B cell (primary cell): ENCODE measurements at regions of chr17 and their contacts with region 1.

Region 1: DNA sequence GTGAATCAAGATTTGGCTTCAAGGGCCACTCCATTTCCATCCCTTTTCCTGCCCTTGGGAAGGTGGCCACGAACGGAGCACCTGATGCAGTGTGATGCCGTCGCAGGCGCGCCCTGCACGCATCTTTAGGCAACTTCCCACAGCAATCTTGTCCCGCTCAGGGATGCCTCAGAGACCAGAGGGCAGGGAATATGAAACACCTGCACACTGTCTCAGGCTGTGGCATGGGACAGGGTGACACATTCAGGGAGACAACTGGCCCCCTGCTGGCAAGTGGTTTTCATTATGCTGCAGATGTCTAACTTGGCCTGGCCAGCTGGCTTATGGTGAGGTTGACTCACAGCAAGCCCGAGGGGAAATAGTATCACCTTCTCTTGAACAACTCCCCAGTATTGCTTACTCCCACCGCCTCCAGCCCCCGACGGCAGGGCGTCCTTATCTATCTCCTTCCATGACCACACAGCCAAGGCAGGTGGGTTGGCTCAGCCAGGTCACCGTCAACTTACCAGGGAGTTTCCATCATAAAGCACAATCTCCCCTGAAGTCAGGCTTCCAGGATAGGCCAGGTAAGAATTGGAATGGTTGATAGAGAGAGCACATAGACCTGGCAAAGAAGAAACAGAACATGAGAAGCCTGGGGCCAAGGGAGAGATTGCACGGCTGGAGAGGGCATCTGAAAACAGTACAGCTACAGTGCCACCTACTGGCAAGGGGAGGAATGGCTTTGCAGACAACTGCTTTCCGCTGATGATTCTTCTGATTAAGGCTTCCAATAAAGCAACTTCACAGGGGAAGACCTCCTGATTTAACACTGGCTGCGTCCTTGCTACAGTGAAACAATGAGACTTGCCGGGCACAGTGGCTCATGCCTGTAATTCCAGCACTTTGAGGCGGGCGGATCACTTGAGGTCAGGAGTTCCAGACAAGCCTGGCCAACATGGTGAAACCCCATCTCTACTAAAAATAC is 21.1 kb downstream of the WIPI1 start:
- DNase-seq: peak; percentile 86
- ATAC-seq: peak; percentile 74
- H3K4me3 ChIP-seq: no peak overlapping the region
- H3K4me3 Mint-ChIP-seq: peak overlapping the region; percentile 63
- H3K27ac ChIP-seq: no peak overlapping the region
- H3K27ac Mint-ChIP-seq: peak overlapping the region; percentile 13
- H3K4me1 ChIP-seq: peaks cover 39 to 40% of the 10 kb centered on the region in 2 donors
- H3K4me1 Mint-ChIP-seq: peaks cover 50% of the 10 kb centered on the region
- H3K27me3 ChIP-seq: no peaks in the 10 kb centered on the region
- H3K27me3 Mint-ChIP-seq: no peaks in the 10 kb centered on the region
- CTCF ChIP-seq: peak; percentile 85

Region 2: DNA sequence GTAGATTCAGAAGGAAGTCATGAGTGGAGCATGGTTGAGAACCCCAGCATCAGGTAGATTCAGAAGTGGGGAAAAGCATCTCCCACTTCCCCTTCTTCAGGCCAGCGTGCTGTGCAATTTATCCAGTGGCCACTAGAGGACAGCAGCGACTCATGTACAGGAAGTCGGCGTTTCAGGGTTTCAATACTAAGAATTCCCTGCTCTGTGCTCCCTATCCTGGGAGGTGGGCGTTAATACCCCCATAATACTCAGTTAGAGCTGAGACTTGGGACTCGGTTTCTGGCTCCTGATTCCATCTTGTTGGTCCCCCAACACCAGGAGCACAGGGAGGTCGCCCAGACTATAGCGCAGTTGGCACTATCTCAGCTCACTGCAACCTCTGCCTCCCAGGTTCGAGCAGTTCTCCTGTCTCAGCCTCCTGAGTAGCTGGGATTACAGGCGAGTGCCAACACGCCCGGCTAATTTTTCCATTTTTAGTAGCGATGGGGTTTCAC is 263.7 kb before region 1 on chr17:
- CTCF ChIA-PET with region 1: interaction called, 43 read pairs
- POLR2A ChIA-PET with region 1: no interaction called
- intact Hi-C with region 1: loop called (anchors 1 kb)
- DNase-seq: peak; percentile 87
- ATAC-seq: peak; percentile 94
- H3K4me3 ChIP-seq: no peak overlapping the region
- H3K4me3 Mint-ChIP-seq: no peak overlapping the region
- H3K27ac ChIP-seq: no peak overlapping the region
- H3K27ac Mint-ChIP-seq: no peak overlapping the region
- H3K4me1 ChIP-seq: peaks cover 0 to 9% of the 10 kb centered on the region in 2 donors
- H3K4me1 Mint-ChIP-seq: peaks cover 3% of the 10 kb centered on the region
- H3K27me3 ChIP-seq: no peaks in the 10 kb centered on the region
- H3K27me3 Mint-ChIP-seq: no peaks in the 10 kb centered on the region
- CTCF ChIP-seq: peak; percentile 99

Region 3: GRCh38 chr17:68255731-68256538 is 180.2 kb before region 1 on chr17:
- CTCF ChIA-PET with region 1: interaction called, 66 read pairs
- POLR2A ChIA-PET with region 1: no interaction called
- intact Hi-C with region 1: no loop called
- DNase-seq: peak; percentile 42
- ATAC-seq: no peak
- H3K4me3 ChIP-seq: peak overlapping the region in 1 of 5 experiments; percentile 11
- H3K4me3 Mint-ChIP-seq: peak overlapping the region; percentile 72
- H3K27ac ChIP-seq: peak overlapping the region; percentile 30 to 84
- H3K27ac Mint-ChIP-seq: peak overlapping the region; percentile 85
- H3K4me1 ChIP-seq: peaks cover 68 to 73% of the 10 kb centered on the region in 2 donors
- H3K4me1 Mint-ChIP-seq: peaks cover 74% of the 10 kb centered on the region
- H3K27me3 ChIP-seq: no peaks in the 10 kb centered on the region
- H3K27me3 Mint-ChIP-seq: no peaks in the 10 kb centered on the region
- CTCF ChIP-seq: no peak

Region 4: DNA sequence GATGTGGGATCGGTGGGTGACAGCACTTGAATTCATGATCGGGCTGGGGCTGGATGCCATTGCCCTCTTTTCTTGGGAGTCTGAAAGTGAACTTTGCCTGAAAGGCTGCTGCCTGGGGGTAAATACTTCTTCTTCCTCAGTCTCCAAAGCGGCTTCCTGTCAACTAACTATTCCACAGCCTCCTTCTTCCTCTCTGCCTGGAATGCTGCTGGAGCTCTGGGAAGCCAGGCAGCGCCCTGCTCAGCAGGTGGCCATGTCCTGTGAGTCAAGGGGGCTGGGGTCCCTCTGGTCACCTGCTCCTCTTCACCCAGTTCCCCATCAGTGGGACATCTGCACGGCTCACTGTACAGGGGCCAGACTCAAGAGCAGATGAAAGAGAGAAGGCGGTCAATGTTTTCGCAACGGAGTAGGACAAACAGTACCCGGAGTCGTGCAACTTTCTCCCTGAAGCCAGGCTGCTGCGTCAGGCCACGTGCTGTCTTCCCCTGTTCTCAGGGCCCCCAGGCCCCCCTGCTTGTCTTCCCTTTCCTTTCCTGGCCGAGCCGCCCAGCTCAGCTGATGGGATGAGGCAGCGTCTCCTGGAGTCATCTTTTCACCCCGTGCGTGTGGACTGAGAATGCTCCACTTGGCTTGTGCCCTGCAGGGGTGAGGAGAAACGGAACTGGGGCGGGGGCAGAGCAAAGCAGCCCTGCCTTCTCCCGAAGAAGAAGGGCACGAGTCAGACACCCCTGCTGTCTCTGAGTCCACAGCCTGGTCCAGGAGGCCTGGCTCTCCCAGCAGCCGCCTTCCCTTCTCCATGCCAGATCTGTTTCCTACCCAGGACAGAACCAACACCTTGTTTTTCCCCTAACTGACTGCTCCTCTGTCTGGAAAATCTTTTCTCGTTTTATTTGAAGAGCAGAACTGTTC is 58.0 kb before region 1 on chr17:
- CTCF ChIA-PET with region 1: no interaction called
- POLR2A ChIA-PET with region 1: no interaction called
- intact Hi-C with region 1: no loop called
- DNase-seq: no peak
- ATAC-seq: no peak
- H3K4me3 ChIP-seq: no peak overlapping the region
- H3K4me3 Mint-ChIP-seq: no peak overlapping the region
- H3K27ac ChIP-seq: no peak overlapping the region
- H3K27ac Mint-ChIP-seq: no peak overlapping the region
- H3K4me1 ChIP-seq: no peaks in the 10 kb centered on the region
- H3K4me1 Mint-ChIP-seq: peaks cover 5% of the 10 kb centered on the region
- H3K27me3 ChIP-seq: peaks cover 0 to 2% (median 1%) of the 10 kb centered on the region in 4 experiments
- H3K27me3 Mint-ChIP-seq: peaks cover 23% of the 10 kb centered on the region
- CTCF ChIP-seq: no peak

Region 5: DNA sequence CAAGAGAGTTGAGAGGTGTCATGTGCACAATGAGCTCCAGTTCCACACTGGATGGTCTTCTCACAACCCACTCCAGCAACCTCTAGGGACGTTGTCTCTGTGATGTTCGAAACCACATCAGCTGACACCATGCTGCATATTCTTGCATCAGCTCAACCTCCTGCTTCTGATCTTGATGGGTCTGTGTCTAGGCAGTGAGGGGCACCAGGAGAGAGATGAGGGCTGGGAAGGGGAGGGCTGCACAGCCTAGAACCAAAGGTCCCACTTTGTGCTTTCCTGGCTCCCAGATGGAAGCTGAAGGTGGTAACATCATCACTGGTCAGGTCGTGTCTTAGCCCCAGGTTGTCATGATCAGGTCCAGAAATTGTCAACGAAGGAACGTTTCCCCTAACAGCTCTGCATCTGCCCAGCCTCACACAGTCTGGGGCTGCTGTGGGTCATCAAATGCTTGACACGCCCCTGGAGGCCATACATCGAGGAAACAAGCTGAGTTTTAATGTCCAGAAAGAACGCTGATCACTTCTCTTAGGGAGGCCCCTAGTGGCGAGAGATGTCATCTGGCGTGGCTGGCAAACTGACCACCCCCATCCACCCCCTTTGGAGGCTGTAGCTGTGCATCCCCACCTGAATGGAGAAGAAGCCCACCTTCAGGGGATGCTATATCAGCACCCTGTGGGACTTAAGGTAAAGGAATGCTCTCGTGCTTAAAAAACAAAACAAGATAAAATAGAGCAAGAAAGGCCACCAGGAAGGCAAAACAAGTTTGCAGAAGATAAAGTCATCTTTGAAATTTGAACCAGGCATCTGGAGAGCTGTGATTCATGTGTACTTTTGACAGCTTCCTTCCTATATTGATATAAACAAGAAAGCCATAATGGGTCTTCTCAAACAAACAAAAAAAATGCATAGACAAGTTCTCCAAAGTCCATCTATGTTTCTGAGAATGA is 37.2 kb before region 1 on chr17:
- CTCF ChIA-PET with region 1: interaction called, 13 read pairs
- POLR2A ChIA-PET with region 1: no interaction called
- intact Hi-C with region 1: loop called (anchors 1 kb)
- DNase-seq: peak; percentile 55
- ATAC-seq: peak; percentile 76
- H3K4me3 ChIP-seq: no peak overlapping the region
- H3K4me3 Mint-ChIP-seq: peak overlapping the region; percentile 12
- H3K27ac ChIP-seq: no peak overlapping the region
- H3K27ac Mint-ChIP-seq: peak overlapping the region; percentile 35
- H3K4me1 ChIP-seq: peaks cover 0 to 6% of the 10 kb centered on the region in 2 donors
- H3K4me1 Mint-ChIP-seq: peaks cover 8% of the 10 kb centered on the region
- H3K27me3 ChIP-seq: no peaks in the 10 kb centered on the region
- H3K27me3 Mint-ChIP-seq: peaks cover 3% of the 10 kb centered on the region
- CTCF ChIP-seq: peak; percentile 40

Region 6: DNA sequence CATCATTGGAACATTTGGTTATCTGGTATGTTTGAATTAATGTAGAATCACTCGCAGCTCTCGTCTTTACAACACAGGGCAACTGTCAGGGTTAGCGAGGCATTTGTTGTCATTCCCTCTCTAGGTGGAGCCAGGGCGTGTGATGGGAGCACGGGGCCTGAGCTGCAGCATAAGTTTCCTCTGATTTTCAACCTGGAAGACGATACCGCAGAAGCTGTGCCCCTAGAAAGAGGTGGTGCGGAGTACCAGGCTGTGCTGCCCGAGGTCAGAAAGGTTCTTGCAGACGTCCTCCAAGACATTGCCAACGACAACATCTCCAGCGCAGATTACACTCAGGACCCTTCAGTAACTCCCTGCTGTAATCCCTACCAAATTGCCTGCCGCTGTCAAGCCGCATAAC is 16.1 kb before region 1 on chr17:
- CTCF ChIA-PET with region 1: interaction called, 9 read pairs
- POLR2A ChIA-PET with region 1: no interaction called
- intact Hi-C with region 1: loop called (anchors 2 kb)
- DNase-seq: no peak
- ATAC-seq: no peak
- H3K4me3 ChIP-seq: no peak overlapping the region
- H3K4me3 Mint-ChIP-seq: no peak overlapping the region
- H3K27ac ChIP-seq: no peak overlapping the region
- H3K27ac Mint-ChIP-seq: no peak overlapping the region
- H3K4me1 ChIP-seq: no peaks in the 10 kb centered on the region
- H3K4me1 Mint-ChIP-seq: peaks cover under 1% of the 10 kb centered on the region
- H3K27me3 ChIP-seq: no peaks in the 10 kb centered on the region
- H3K27me3 Mint-ChIP-seq: no peaks in the 10 kb centered on the region
- CTCF ChIP-seq: no peak

Region 7: DNA sequence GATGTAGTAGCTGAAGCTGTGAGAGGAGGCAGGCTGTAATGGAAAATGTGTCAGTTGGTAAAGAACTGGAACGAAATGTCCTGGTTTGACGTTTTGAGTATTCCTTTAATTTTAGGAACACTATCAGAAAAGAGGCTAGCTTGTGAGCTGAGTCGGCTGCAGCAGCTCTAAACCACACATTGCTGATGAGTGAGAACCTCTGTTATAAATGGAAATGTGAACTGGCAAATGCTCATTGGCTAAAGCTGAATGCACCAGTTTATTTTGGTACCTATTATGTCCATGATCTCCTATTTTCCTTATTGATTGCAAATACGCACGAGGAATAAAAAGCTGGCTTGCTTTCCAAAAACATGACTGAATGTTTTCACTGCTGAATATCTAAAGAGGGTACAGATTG is 32.2 kb after region 1 on chr17:
- CTCF ChIA-PET with region 1: interaction called, 19 read pairs
- POLR2A ChIA-PET with region 1: no interaction called
- intact Hi-C with region 1: no loop called
- DNase-seq: no peak
- ATAC-seq: no peak
- H3K4me3 ChIP-seq: no peak overlapping the region
- H3K4me3 Mint-ChIP-seq: no peak overlapping the region
- H3K27ac ChIP-seq: no peak overlapping the region
- H3K27ac Mint-ChIP-seq: no peak overlapping the region
- H3K4me1 ChIP-seq: peaks cover 0 to 2% of the 10 kb centered on the region in 2 donors
- H3K4me1 Mint-ChIP-seq: peaks cover 2% of the 10 kb centered on the region
- H3K27me3 ChIP-seq: no peaks in the 10 kb centered on the region
- H3K27me3 Mint-ChIP-seq: peaks cover 9% of the 10 kb centered on the region
- CTCF ChIP-seq: no peak